Left colon (tissue), 2 donors: ENCODE measurements at regions of chr4 and their contacts with region 1.

Region 1: GRCh38 chr4:121192480-121192879 is 28.4 kb upstream of the TNIP3 start:
- DNase-seq: no peak
- ATAC-seq: no peak

Region 2: DNA sequence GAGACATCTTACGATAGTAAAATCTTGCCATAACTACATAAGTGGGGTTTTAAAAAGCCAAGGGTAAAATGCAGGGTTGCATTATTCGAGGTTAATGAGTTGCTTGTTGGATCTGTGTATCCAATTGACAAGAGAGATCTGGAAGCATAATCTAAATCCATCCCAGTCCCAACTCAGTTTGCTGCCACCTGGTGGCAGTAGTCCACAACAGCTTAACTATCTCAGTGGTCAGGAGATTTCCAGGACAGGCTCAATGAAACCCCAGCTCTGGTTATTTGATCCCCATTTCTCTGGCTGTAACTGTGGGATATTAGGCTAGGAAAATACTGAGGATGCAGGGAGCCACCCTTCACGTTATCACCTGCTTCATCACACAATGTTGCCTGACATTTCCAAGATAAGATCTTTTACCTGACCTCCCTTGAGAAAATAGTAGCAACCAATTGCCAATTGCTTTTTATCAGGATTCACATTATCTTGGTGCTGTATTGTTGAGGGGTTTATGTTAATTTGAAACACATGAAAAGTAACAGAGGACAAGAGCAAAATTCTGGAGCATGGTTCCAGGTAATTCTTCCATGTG is 59.8 kb after region 1 on chr4:
- intact Hi-C with region 1: loop called in 1 of 2 experiments (anchors 5 kb)
- DNase-seq: peak; percentile 46 to 83
- ATAC-seq: peak; percentile 78